PC-9 (cell line): ENCODE measurements at regions of chr5 and their contacts with region 1.

Region 1: GRCh38 chr5:157328277-157328912 is 62.5 kb downstream of the CYFIP2 start:
- DNase-seq: peak; percentile 50 to 61
- H3K4me3 ChIP-seq: peak overlapping the region; percentile 46; the same call in 1 of the 2 replicates
- H3K27ac ChIP-seq: no peak overlapping the region
- H3K4me1 ChIP-seq: 0 out of 2 replicates have a peak, but pooled peaks cover 4% of the 10 kb centered on the region
- H3K27me3 ChIP-seq: 0 out of 2 replicates have a peak, but pooled peaks cover 5% of the 10 kb centered on the region
- CTCF ChIP-seq: peak; percentile 91

Region 2: GRCh38 chr5:157020490-157021222 is 307.7 kb before region 1 on chr5:
- CTCF ChIA-PET with region 1: no interaction called
- POLR2A ChIA-PET with region 1: no interaction called
- intact Hi-C with region 1: no loop called
- DNase-seq: no peak
- H3K4me3 ChIP-seq: no peak overlapping the region
- H3K27ac ChIP-seq: no peak overlapping the region
- H3K4me1 ChIP-seq: no peaks in the 10 kb centered on the region
- H3K27me3 ChIP-seq: no peaks in the 10 kb centered on the region
- CTCF ChIP-seq: no peak

Region 3: DNA sequence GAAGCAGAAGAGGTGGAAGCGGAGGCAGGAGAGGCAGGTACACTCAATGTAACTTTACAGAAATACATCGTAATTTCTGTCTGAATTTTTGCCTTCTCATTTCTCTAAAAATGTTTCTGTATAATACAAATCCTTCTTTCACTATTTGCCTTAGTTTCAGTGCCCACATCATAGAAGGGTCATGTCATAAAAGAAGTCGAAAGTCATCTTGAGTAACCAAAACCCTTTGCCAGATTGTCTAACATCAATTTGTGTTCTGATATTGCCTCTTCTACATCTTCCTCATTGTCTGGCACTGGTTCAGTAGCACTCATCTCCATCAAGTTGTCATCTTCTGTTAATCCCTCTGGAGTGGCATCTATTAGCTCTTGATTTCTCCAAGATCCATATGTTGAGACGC is 68.7 kb before region 1 on chr5:
- CTCF ChIA-PET with region 1: no interaction called
- POLR2A ChIA-PET with region 1: no interaction called
- intact Hi-C with region 1: loop called (anchors 5 kb)
- DNase-seq: no peak
- H3K4me3 ChIP-seq: no peak overlapping the region
- H3K27ac ChIP-seq: no peak overlapping the region
- H3K4me1 ChIP-seq: no peaks in the 10 kb centered on the region
- H3K27me3 ChIP-seq: peaks cover 29% of the 10 kb centered on the region
- CTCF ChIP-seq: no peak

Region 4: GRCh38 chr5:157378502-157378901 is 50.1 kb after region 1 on chr5:
- CTCF ChIA-PET with region 1: no interaction called
- POLR2A ChIA-PET with region 1: no interaction called
- intact Hi-C with region 1: no loop called
- DNase-seq: no peak
- H3K4me3 ChIP-seq: no peak overlapping the region
- H3K27ac ChIP-seq: no peak overlapping the region
- H3K4me1 ChIP-seq: no peaks in the 10 kb centered on the region
- H3K27me3 ChIP-seq: no peaks in the 10 kb centered on the region
- CTCF ChIP-seq: no peak

Region 5: GRCh38 chr5:157431544-157432200 is 103.3 kb after region 1 on chr5:
- CTCF ChIA-PET with region 1: interaction called, 3 read pairs
- POLR2A ChIA-PET with region 1: no interaction called
- intact Hi-C with region 1: loop called (anchors 2 kb)
- DNase-seq: no peak
- H3K4me3 ChIP-seq: no peak overlapping the region
- H3K27ac ChIP-seq: no peak overlapping the region
- H3K4me1 ChIP-seq: no peaks in the 10 kb centered on the region
- H3K27me3 ChIP-seq: no peaks in the 10 kb centered on the region
- CTCF ChIP-seq: peak; percentile 63

Region 6: DNA sequence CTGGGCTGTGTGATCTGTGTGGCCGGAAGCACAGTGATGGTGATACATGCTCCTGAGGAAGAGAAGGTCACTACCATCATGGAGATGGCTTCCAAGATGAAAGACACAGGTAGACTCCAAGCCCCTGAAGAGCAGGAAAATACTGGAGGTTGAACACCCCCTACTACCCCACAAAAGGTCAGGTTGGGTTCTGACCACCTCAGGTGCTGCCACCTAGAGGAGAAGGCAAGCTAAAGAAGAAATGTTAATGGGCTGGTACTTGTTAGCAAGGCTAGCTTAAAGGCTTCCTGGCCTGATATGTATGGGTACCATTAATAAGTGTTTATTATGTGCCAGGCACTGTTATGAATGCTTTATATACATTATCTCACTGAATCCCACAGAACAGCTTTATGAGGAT is 143.3 kb after region 1 on chr5:
- CTCF ChIA-PET with region 1: interaction called, 11 read pairs
- POLR2A ChIA-PET with region 1: no interaction called
- intact Hi-C with region 1: loop called (anchors 1 kb)
- DNase-seq: peak in 1 of 2 experiments; percentile 9
- H3K4me3 ChIP-seq: no peak overlapping the region
- H3K27ac ChIP-seq: no peak overlapping the region
- H3K4me1 ChIP-seq: no peaks in the 10 kb centered on the region
- H3K27me3 ChIP-seq: no peaks in the 10 kb centered on the region
- CTCF ChIP-seq: peak; percentile 80

Region 7: GRCh38 chr5:157961828-157962590 is 633.6 kb after region 1 on chr5:
- CTCF ChIA-PET with region 1: no interaction called
- POLR2A ChIA-PET with region 1: no interaction called
- intact Hi-C with region 1: loop called (anchors 10 kb)
- DNase-seq: no peak
- H3K4me3 ChIP-seq: no peak overlapping the region
- H3K27ac ChIP-seq: no peak overlapping the region
- H3K4me1 ChIP-seq: no peaks in the 10 kb centered on the region
- H3K27me3 ChIP-seq: no peaks in the 10 kb centered on the region
- CTCF ChIP-seq: no peak